ENCODE measurements at regions of chr19 and their contacts with region 1.

Region 1: GRCh38 chr19:2944775-2945574 is at the start of gene ZNF77:
- DNase-seq: peak; percentile 99 to 100
- H3K4me3 ChIP-seq: peak within 1 kb of the TSS; percentile 71 to 81
- H3K27ac ChIP-seq: peak within 1 kb of the TSS; percentile 82 to 85
- H3K4me1 ChIP-seq: peaks cover 0 to 26% (median 22%) of the 10 kb centered on the region in 4 donors
- H3K27me3 ChIP-seq: no peaks in the 10 kb centered on the region
- CTCF ChIP-seq: peak in 1 of 2 experiments; percentile 51

Region 2: GRCh38 chr19:2905918-2906519 is 39.0 kb before region 1 on chr19:
- intact Hi-C with region 1: loop called (anchors 5 kb)
- DNase-seq: no peak
- H3K4me3 ChIP-seq: no peak overlapping the region
- H3K27ac ChIP-seq: no peak overlapping the region
- H3K4me1 ChIP-seq: peaks cover 0 to 17% (median 8%) of the 10 kb centered on the region in 4 donors
- H3K27me3 ChIP-seq: no peaks in the 10 kb centered on the region
- CTCF ChIP-seq: no peak

Region 3: GRCh38 chr19:3006075-3006767 is 61.2 kb after region 1 on chr19:
- intact Hi-C with region 1: no loop called
- DNase-seq: no peak
- H3K4me3 ChIP-seq: no peak overlapping the region
- H3K27ac ChIP-seq: no peak overlapping the region
- H3K4me1 ChIP-seq: no peaks in the 10 kb centered on the region
- H3K27me3 ChIP-seq: peaks cover 0 to 5% of the 10 kb centered on the region in 2 donors
- CTCF ChIP-seq: no peak

Region 4: DNA sequence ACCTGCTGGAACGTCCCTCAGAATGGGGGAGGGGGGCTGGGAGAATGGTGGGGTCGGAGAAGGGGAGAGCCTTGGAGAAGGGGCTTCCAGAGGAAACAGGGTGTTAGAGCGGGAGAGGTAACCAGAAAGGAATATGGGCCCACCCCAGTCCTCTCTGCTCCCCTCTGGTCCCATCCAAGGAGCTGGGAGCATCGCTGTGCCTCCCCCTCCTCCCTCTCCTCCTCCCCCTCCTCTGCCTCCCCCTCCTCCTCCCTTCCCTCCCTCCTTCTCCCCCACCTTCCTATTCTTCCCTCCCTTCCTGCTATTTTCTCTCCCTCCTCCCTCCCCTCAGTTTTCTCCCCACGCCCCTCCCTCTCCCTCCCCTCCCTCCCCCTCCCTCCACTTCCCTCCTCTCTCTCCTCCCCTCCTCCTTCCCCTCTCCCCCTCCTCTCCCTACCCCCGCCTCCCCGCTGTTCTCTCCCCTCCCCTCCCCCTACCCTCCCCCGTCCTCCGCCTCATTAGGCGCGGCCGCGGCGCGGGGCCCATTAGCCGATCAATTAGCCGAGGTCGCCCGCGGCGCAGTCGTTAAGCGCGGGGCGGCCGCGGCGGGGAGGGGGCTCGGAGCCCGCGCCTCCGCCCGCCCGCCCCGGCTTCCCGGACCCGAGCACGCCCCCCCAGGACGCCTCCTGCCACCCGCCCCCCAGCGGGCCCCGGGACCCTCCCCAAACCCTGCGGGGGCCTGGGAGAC is 101.9 kb after region 1 on chr19:
- intact Hi-C with region 1: no loop called
- DNase-seq: no peak
- H3K4me3 ChIP-seq: peak overlapping the region; percentile 39 to 59
- H3K27ac ChIP-seq: peak overlapping the region; percentile 37 to 67
- H3K4me1 ChIP-seq: peaks cover 0 to 29% (median 11%) of the 10 kb centered on the region in 4 donors
- H3K27me3 ChIP-seq: peaks cover 0 to 22% of the 10 kb centered on the region in 2 donors
- CTCF ChIP-seq: no peak

Region 5: DNA sequence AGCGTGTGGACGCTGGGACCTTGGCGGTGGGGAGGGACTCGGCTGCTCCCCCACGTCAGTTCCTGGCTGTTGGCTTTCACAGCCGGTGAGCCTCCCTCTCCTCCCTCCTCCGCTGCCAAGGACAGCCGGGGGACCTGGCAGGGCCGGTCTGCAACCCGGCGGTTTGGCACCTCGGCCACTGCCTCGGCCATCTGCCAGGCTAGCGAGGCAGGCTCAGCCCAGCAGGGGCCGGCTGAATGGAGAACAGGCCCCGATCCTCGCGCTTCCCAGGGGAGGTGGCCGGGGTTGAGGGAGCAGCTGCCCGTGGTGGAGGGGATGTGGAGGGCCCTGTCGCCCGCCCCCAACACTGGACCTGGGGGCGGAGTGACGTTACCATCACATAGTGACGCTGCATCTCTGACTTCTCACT is 112.3 kb after region 1 on chr19:
- intact Hi-C with region 1: no loop called
- DNase-seq: peak; percentile 83 to 95
- H3K4me3 ChIP-seq: no peak overlapping the region
- H3K27ac ChIP-seq: peak overlapping the region; percentile 64 to 65
- H3K4me1 ChIP-seq: peaks cover 0 to 52% (median 26%) of the 10 kb centered on the region in 4 donors
- H3K27me3 ChIP-seq: no peaks in the 10 kb centered on the region
- CTCF ChIP-seq: peak; percentile 19 to 35

Region 6: GRCh38 chr19:3336680-3337523 is 391.9 kb after region 1 on chr19:
- intact Hi-C with region 1: no loop called
- DNase-seq: peak; percentile 90 to 99
- H3K4me3 ChIP-seq: peak overlapping the region in 1 of 2 donors; percentile 16
- H3K27ac ChIP-seq: peak overlapping the region; percentile 88 to 96
- H3K4me1 ChIP-seq: peaks cover 4 to 65% (median 51%) of the 10 kb centered on the region in 4 donors
- H3K27me3 ChIP-seq: no peaks in the 10 kb centered on the region
- CTCF ChIP-seq: no peak

Measured in tibial artery (tissue), 4 donors.